IMR-90 (cell line): ENCODE measurements at regions of chr5 and their contacts with region 1.

Region 1: DNA sequence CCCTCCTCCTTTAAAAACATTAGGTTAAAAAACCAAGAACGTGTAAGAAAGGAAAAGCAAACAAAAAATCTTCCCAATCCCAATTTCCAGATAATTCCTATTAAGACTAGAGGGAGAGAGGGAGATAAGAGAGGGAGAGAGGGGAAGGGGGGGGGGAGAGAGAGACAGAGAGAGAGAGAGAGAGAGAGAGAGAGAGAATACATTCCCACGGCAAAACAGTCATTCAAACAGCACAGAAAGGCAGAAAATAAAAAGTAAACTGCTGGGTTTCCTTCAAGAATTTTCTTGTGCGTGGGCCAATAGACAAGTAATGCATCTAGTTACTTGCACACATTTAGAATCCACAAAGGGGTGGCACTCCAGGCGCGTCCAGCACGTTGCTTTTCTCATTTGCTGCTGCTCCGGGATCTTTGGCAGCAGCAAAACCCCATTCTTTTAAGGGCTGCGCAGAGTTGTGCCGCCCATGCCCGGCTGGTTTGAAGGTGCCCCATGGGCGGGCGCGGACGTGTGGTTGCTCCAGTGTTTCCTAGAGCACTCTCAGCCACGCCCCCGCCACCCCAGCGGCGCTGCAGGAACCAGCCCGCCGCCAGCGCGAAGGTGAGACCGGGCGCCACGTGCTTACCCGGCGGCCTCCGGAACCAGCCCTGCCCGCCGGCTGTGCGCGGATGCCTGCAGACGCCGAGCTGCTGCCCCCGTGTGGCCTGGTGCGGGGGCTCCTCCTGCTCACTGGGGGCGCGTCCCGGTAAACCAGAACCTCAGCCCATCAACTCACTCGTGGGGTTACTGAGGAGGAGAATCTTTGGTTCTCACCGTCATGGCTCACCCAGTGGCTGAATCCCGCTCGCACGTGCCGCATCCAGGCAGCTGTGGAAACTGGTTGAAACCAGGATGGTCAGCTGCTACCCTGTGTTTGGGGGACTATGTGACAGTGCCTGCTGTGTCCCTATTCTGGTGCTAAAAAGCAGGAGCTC is 44.6 kb downstream of the STC2 start:
- DNase-seq: peak; percentile 49
- ATAC-seq: peak; percentile 98
- H3K4me3 ChIP-seq: peak overlapping the region; percentile 14; the same call in 1 of the 2 replicates
- H3K27ac ChIP-seq: no peak overlapping the region
- H3K4me1 ChIP-seq: no peaks in the 10 kb centered on the region
- H3K27me3 ChIP-seq: peaks cover 39% of the 10 kb centered on the region
- CTCF ChIP-seq: peak; percentile 68
- POLR2A ChIP-seq: no peak
- RAD21 ChIP-seq: peak; percentile 74

Region 2: DNA sequence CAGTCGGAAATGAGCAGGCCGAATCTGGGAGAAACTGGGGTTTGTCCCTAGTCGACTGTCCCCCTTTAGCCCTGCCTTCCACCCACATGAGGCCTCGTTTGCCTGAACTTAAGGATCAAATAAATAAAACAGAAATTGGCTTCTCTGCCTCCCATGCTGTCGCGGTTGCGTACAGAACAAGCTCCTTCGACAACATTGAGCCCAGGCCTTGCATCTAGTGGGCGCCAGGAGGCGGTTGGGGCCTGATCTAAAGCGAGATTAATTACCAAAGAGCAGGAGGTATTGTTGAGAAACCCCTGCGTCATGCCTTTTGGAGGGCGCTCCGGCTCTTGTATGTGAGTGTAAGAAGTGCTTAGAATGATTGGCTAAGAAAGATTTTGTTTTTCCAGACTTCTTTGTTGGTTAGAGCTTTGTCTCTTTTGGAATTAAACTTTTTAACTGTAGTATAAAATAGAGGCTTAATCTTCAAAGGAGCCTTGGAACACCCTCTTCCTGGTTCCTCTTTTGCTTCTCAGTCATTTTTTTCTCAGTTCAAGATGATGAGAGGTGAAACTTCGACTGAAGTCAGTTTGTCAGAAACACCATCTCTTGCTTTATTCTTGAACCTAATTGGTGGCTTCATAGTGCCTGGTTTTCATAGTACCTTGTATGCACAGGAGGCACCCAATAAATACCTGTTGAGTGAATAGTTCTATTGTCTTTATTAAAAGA is 299.2 kb before region 1 on chr5:
- CTCF ChIA-PET with region 1: no interaction called
- POLR2A ChIA-PET with region 1: no interaction called
- dilution Hi-C with region 1: no loop called
- in situ Hi-C with region 1: loop called (anchors 5 kb)
- intact Hi-C with region 1: loop called (anchors 2 kb)
- DNase-seq: peak; percentile 92
- ATAC-seq: peak; percentile 65
- H3K4me3 ChIP-seq: peak overlapping the region; percentile 86
- H3K27ac ChIP-seq: peak overlapping the region; percentile 92
- H3K4me1 ChIP-seq: peaks cover 2% of the 10 kb centered on the region; the same call in 1 of the 2 replicates
- H3K27me3 ChIP-seq: no peaks in the 10 kb centered on the region
- CTCF ChIP-seq: peak; percentile 66
- POLR2A ChIP-seq: peak; percentile 58; the same call in 1 of the 2 replicates
- RAD21 ChIP-seq: peak; percentile 79

Region 3: DNA sequence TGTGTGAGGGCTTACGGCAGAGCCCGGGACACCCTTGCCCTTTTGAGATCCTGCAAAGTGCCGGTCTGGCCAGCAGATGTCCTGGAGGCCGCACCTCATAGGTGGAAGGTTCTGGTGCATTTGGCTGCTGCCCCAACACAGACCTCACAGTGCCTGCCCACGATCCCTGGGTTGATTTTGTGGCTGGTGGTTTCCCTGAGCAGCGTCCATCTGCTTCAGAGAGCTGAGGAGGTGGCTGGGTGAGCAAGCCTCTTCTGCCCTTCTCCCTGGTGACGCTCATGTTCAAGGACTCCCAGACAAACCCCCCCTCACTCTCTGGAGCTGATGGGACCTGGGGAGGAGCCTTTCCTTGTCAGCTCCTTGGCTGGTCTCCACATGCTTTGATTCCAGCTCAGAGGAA is 120.4 kb before region 1 on chr5:
- CTCF ChIA-PET with region 1: no interaction called
- POLR2A ChIA-PET with region 1: no interaction called
- dilution Hi-C with region 1: no loop called
- in situ Hi-C with region 1: no loop called
- intact Hi-C with region 1: loop called (anchors 1 kb)
- DNase-seq: peak; percentile 55
- ATAC-seq: no peak
- H3K4me3 ChIP-seq: no peak overlapping the region
- H3K27ac ChIP-seq: no peak overlapping the region
- H3K4me1 ChIP-seq: peaks cover 2% of the 10 kb centered on the region; the same call in 1 of the 2 replicates
- H3K27me3 ChIP-seq: no peaks in the 10 kb centered on the region
- CTCF ChIP-seq: no peak
- POLR2A ChIP-seq: no peak
- RAD21 ChIP-seq: no peak